PC-9 (cell line): ENCODE measurements at regions of chr2 and their contacts with region 1.

Region 1: DNA sequence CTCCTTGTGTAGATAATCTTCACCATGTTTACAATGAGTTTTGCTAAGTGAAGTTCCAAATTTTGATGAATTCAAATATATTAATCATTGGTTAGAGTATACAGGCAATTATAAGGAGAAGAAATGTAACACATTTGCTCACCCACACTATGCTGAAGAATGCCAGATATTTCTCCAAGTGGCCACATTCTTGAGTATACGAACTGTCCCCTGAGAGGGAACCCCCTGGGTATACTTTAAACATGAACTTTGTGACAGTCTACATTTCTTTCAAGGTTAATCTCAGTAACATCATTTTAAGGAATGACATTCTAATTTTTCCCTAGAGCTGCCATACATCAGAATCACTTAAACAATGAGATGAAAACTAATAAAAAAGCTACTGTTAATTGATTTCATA is 39.8 kb upstream of the CDKL4 start:
- DNase-seq: no peak
- H3K4me3 ChIP-seq: no peak overlapping the region
- H3K27ac ChIP-seq: no peak overlapping the region
- H3K4me1 ChIP-seq: no peaks in the 10 kb centered on the region
- H3K27me3 ChIP-seq: no peaks in the 10 kb centered on the region
- CTCF ChIP-seq: no peak

Region 2: GRCh38 chr2:39266139-39266805 is 17.3 kb before region 1 on chr2:
- CTCF ChIA-PET with region 1: no interaction called
- POLR2A ChIA-PET with region 1: interaction called, 11 read pairs
- intact Hi-C with region 1: no loop called
- DNase-seq: no peak
- H3K4me3 ChIP-seq: no peak overlapping the region
- H3K27ac ChIP-seq: no peak overlapping the region
- H3K4me1 ChIP-seq: no peaks in the 10 kb centered on the region
- H3K27me3 ChIP-seq: no peaks in the 10 kb centered on the region
- CTCF ChIP-seq: no peak